IMR-90 (cell line): ENCODE measurements at regions of chr17 and their contacts with region 1.

Region 1: DNA sequence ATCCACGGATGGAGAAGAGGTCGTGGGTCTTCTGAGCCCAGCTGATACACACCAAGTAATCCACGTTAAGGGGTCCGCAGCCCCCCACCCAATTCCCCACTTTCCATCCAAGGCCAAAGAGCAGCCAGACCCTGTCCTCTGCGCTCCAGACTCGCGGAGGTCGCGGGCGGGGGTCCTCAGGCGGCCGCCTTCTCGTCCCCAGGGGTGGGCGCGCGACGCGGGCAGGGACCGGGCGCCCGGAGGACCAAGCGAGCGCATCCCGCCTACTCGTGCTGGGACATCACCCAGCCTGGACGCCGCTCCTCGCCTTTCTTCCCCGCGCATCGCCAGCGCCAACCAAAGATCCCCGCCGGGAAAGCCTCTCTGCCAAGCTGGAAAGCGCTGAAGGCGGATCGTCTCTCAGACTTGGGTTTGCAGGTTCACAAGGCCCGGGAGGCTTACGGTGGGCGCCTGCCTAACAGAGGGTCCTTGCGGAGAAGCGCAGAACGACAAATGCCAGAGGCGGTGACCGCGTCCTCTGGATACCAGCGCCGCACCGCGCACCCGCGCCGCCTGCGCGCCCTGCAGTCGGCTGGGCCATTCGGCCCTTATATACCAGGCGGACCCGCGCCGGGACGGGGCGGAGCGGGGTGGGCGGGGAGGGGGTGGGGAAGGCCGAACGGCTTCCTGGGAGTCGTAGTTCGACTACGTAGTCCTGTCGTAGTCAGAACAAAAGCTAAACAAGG is 471.6 kb downstream of the SOX9 start:
- DNase-seq: peak; percentile 84
- ATAC-seq: peak; percentile 89
- H3K4me3 ChIP-seq: peak overlapping the region; percentile 99
- H3K27ac ChIP-seq: peak overlapping the region; percentile 91
- H3K4me1 ChIP-seq: peaks cover 22% of the 10 kb centered on the region
- H3K27me3 ChIP-seq: no peaks in the 10 kb centered on the region
- CTCF ChIP-seq: no peak
- POLR2A ChIP-seq: peak; percentile 100
- RAD21 ChIP-seq: no peak; the same call in 1 of the 2 replicates

Region 2: DNA sequence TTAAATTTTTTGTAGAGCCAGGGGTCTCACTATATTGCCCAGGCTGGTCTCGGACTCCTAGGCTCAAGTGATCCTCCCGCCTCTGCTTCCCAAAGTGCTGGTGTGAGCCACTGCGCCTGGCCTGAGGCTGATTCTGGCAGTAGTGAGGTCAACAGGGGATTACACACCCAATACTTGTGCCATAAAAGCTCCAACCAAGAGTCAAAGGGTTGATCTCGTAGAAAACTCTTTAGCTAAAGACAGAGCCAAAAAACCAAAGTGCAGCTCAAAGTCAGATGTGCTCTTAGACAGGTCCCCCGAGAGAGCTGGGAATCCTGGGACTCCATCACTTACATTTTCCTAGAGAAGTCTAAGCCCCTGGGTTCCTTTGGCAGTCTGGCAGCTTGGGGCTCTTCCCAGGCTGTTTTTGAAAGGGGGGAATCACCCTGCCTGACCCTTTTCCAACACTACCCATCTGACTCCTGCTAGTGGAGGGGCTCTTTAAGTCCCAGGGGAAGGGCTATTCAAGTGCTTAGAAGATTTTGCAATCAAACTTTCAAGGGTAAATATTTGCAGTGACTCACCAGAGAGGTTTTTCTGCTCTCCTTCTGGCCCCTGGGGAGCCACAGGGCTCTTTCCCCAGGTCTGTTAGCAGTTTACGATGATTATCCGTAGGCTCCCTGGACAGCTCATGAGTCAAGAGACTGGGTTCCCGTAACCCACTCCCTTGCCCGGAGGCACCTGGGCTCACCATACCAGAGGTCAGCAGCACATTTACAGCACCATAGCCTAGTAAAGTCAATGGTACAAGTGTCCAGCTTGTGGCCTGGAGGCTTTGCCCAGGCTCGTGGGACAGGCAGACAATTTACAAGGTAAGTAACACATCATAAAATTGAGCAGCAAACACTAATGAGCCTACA is 91.4 kb after region 1 on chr17:
- CTCF ChIA-PET with region 1: no interaction called
- POLR2A ChIA-PET with region 1: no interaction called
- dilution Hi-C with region 1: no loop called
- in situ Hi-C with region 1: no loop called
- intact Hi-C with region 1: loop called (anchors 5 kb)
- DNase-seq: peak; percentile 98
- ATAC-seq: peak; percentile 82
- H3K4me3 ChIP-seq: no peak overlapping the region
- H3K27ac ChIP-seq: peak overlapping the region; percentile 85
- H3K4me1 ChIP-seq: peaks cover 26% of the 10 kb centered on the region
- H3K27me3 ChIP-seq: no peaks in the 10 kb centered on the region
- CTCF ChIP-seq: no peak
- POLR2A ChIP-seq: no peak
- RAD21 ChIP-seq: peak; percentile 3; the same call in 1 of the 2 replicates

Region 3: GRCh38 chr17:73359987-73360410 is 767.6 kb after region 1 on chr17:
- CTCF ChIA-PET with region 1: no interaction called
- POLR2A ChIA-PET with region 1: no interaction called
- dilution Hi-C with region 1: no loop called
- in situ Hi-C with region 1: loop called (anchors 25 kb)
- intact Hi-C with region 1: no loop called
- DNase-seq: no peak
- ATAC-seq: no peak
- H3K4me3 ChIP-seq: no peak overlapping the region
- H3K27ac ChIP-seq: no peak overlapping the region
- H3K4me1 ChIP-seq: peaks cover 2% of the 10 kb centered on the region; the same call in 1 of the 2 replicates
- H3K27me3 ChIP-seq: peaks cover 14% of the 10 kb centered on the region
- CTCF ChIP-seq: no peak
- POLR2A ChIP-seq: no peak
- RAD21 ChIP-seq: no peak